PC-3 (cell line): ENCODE measurements at regions of chrX and their contacts with region 1.

Region 1: DNA sequence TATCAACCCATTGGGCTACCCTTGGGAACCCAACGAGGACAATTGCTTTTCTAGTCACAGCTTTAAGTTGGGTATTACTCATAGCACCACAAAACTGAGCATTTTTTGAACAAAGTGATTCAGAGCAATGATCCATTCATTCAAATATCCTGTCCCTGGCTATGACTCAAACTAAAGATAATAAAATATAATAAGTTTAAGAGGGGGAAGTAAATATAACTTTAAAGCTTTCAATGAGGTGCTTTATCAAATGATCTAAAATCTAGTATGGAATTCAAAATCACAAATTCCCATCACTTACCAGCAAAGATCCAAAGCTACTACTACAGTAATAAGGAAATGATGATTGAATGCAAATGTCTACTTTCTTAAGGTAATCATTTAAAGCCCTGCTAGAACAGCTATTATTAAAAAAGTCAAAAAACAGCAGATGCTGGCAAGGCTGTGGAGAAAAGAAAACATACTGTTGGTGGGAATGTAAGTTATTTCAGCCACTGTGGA is 39.8 kb upstream of the S100G start:
- DNase-seq: peak; percentile 84
- ATAC-seq: peak; percentile 94
- H3K4me3 ChIP-seq: no peak overlapping the region
- H3K27ac ChIP-seq: peak overlapping the region; percentile 97
- H3K4me1 ChIP-seq: peaks cover 25% of the 10 kb centered on the region
- H3K27me3 ChIP-seq: no peaks in the 10 kb centered on the region
- CTCF ChIP-seq: no peak

Region 2: DNA sequence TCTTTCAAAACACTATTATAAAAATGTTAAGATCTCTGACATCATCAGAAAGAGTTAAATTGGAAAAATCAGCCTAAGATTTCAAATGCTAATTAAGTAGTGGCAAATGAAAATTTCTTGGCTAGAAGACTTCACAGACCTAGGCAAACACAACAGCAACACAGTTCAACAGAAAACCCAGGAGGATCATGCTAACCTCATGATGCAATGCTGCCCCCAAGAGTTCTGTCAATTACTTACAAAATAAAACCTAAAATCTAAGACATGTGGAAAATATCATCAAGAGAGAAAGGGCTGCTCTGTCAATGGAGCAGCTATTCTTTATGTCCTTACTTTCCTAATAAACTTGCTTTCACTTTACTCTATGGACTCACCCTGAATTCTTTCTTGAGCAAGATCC is 60.8 kb after region 1 on chrX:
- CTCF ChIA-PET with region 1: no interaction called
- POLR2A ChIA-PET with region 1: interaction called, 25 read pairs
- intact Hi-C with region 1: no loop called
- DNase-seq: peak; percentile 59
- ATAC-seq: peak; percentile 77
- H3K4me3 ChIP-seq: no peak overlapping the region
- H3K27ac ChIP-seq: no peak overlapping the region
- H3K4me1 ChIP-seq: peaks cover 9% of the 10 kb centered on the region
- H3K27me3 ChIP-seq: no peaks in the 10 kb centered on the region
- CTCF ChIP-seq: peak; percentile 66